ENCODE measurements at regions of chr12 and their contacts with region 1.

Region 1: DNA sequence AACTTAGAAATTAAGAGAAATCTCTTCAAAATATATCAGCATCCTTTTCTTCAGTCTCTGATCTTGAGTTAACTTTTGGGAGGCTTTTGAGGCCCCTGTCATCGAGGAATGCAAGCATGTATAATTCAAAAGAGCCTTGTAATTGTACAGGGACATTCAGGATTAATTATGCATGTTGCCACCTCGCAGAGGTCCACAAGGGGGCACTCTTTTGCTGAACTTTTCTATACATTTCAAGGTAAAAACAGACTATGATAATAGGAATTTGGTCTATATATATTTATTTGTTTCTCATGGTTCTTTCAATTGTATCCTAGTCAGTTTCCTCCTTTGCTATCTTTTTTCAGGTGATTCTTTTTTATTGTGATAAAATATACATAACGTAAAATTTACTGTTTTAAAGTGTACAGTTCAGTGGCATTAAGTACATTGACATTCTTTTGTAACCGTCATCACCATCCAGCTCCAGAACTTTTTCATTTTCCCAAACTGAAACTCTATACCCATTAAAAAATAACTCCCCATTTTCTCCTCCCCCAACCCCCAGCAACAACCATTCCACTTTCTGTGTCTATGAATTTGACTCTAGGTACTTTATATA is 47.0 kb upstream of the SLC2A13 start:
- DNase-seq: peak; percentile 61 to 74
- H3K4me3 ChIP-seq: no peak overlapping the region
- H3K4me1 ChIP-seq: peaks cover 4% of the 10 kb centered on the region
- H3K27me3 ChIP-seq: 0 out of 2 replicates have a peak, but pooled peaks cover 2% of the 10 kb centered on the region

Region 2: GRCh38 chr12:40215977-40216376 is 63.1 kb after region 1 on chr12:
- in situ Hi-C with region 1: no loop called
- DNase-seq: no peak
- H3K4me3 ChIP-seq: no peak overlapping the region
- H3K4me1 ChIP-seq: peaks cover 6% of the 10 kb centered on the region
- H3K27me3 ChIP-seq: no peaks in the 10 kb centered on the region

Region 3: DNA sequence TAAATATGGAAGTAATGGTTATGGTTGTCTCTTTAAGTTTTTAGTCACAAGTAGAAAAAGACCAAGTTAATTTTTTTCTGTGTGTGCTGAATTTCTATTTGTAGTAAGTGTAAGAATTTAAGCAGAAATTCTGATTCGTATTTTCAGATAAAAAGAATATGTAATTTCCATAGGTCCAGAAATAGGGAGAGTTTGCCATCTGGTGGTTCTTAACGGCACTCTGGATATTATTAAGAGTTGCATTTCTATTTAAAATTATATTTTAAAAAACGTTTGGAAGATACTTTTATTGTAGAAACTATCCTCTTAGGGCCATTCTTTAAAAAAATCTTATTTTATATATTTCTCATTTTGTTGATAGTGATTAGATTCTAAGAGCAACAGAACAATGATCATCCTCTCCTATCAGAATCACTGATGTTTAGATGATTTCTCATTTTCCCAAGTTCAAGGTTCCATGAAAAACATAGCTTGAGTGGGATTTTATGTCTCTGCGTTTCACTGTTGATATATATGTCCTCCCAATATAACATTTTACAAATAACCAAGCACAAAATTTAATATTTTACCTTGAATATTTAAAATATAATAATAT is 160.2 kb after region 1 on chr12:
- in situ Hi-C with region 1: loop called (anchors 25 kb)
- DNase-seq: no peak
- H3K4me3 ChIP-seq: no peak overlapping the region
- H3K4me1 ChIP-seq: no peaks in the 10 kb centered on the region
- H3K27me3 ChIP-seq: no peaks in the 10 kb centered on the region